Activated CD8-positive, alpha-beta T cell treated with anti-CD3 and anti-CD28 coated beads for 36 hours (primary cell): ENCODE measurements at regions of chr20 and their contacts with region 1.

Region 1: GRCh38 chr20:17682103-17682888 is at the start of gene RRBP1:
- DNase-seq: peak; percentile 97
- ATAC-seq: peak; percentile 96
- H3K4me3 Mint-ChIP-seq: peak within 1 kb of the TSS; percentile 78
- H3K27ac Mint-ChIP-seq: peak within 1 kb of the TSS; percentile 82
- H3K4me1 Mint-ChIP-seq: peaks cover 26% of the 10 kb centered on the region
- H3K27me3 Mint-ChIP-seq: peaks cover 27% of the 10 kb centered on the region
- CTCF ChIP-seq: peak; percentile 94
- total RNA-seq, gene RRBP1: 35.2 to 35.9 TPM

Region 2: GRCh38 chr20:17262786-17263185 is 419.5 kb before region 1 on chr20:
- CTCF ChIA-PET with region 1: no interaction called
- POLR2A ChIA-PET with region 1: no interaction called
- intact Hi-C with region 1: no loop called
- DNase-seq: no peak
- ATAC-seq: no peak
- H3K4me3 Mint-ChIP-seq: no peak overlapping the region
- H3K27ac Mint-ChIP-seq: no peak overlapping the region
- H3K4me1 Mint-ChIP-seq: no peaks in the 10 kb centered on the region
- H3K27me3 Mint-ChIP-seq: peaks cover 2% of the 10 kb centered on the region
- CTCF ChIP-seq: no peak

Region 3: GRCh38 chr20:17504898-17505635 is 177.2 kb before region 1 on chr20:
- CTCF ChIA-PET with region 1: interaction called, 22 read pairs
- POLR2A ChIA-PET with region 1: interaction called, 5 read pairs
- intact Hi-C with region 1: no loop called
- DNase-seq: no peak
- ATAC-seq: peak; percentile 63
- H3K4me3 Mint-ChIP-seq: peak overlapping the region; percentile 78
- H3K27ac Mint-ChIP-seq: peak overlapping the region; percentile 85
- H3K4me1 Mint-ChIP-seq: peaks cover 37% of the 10 kb centered on the region
- H3K27me3 Mint-ChIP-seq: peaks cover 3% of the 10 kb centered on the region
- CTCF ChIP-seq: peak; percentile 74

Region 4: GRCh38 chr20:17654649-17655285 is 27.5 kb before region 1 on chr20:
- CTCF ChIA-PET with region 1: interaction called, 11 read pairs
- POLR2A ChIA-PET with region 1: no interaction called
- intact Hi-C with region 1: no loop called
- DNase-seq: peak; percentile 23
- ATAC-seq: no peak
- H3K4me3 Mint-ChIP-seq: no peak overlapping the region
- H3K27ac Mint-ChIP-seq: no peak overlapping the region
- H3K4me1 Mint-ChIP-seq: peaks cover 18% of the 10 kb centered on the region
- H3K27me3 Mint-ChIP-seq: no peaks in the 10 kb centered on the region
- CTCF ChIP-seq: peak; percentile 56

Region 5: DNA sequence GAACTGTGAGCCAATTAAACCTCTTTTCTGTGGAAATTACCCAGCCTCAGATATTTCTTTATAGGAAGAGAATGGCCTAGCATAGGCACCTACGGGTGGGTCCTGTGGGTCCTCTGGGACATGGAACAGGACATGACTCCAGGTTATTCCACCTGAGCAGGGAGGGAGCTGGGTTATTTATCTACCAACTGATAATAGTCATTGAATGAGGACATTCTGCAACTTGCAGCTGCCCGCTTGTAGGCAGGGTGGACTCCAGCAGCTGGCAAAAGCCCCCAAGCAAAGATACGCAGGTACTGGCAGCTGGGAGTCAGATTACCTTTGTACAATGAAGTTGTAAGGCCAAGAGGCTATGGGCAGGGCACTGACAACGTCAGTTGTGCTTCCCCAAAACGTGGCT is 16.1 kb after region 1 on chr20:
- CTCF ChIA-PET with region 1: interaction called, 24 read pairs
- POLR2A ChIA-PET with region 1: no interaction called
- intact Hi-C with region 1: no loop called
- DNase-seq: no peak
- ATAC-seq: no peak
- H3K4me3 Mint-ChIP-seq: no peak overlapping the region
- H3K27ac Mint-ChIP-seq: no peak overlapping the region
- H3K4me1 Mint-ChIP-seq: no peaks in the 10 kb centered on the region
- H3K27me3 Mint-ChIP-seq: peaks cover 10% of the 10 kb centered on the region
- CTCF ChIP-seq: no peak

Region 6: DNA sequence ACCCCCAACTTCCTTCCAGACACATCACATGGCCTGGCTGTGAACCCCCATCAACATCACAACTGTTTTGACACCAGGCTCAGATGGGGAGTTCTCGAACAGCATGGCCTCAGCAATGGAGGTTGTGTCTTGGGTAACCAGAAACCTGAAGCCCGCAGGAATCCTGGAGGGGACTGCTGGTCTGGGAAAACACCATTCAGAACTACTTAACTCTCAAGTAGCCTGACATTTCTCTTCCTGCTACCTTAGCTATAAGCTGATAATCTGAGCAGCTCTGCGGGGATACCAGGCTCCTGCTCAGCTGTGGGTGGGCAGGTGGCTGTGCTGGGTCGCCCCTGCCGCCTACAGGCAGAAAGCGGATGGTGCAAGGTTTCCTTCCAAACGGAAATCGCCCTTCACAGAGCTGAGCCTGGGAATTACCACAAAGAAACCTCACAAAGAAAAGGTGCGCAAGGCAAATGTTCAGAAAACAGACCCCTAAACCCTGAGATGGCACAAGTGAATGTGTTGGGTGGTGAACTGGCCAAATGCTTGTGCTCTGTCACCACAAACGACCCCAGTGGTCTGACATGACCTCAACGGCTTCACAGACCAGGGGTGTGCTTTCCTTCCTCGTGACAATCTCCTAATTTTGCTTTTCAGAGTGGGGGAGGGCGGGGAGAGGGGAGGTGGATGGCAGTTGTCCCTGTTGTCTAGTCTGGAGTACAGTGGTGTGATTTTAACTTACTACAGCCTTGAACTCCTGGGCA is 256.7 kb after region 1 on chr20:
- CTCF ChIA-PET with region 1: interaction called, 19 read pairs
- POLR2A ChIA-PET with region 1: no interaction called
- intact Hi-C with region 1: no loop called
- DNase-seq: peak; percentile 80
- ATAC-seq: peak; percentile 95
- H3K4me3 Mint-ChIP-seq: no peak overlapping the region
- H3K27ac Mint-ChIP-seq: peak overlapping the region; percentile 44
- H3K4me1 Mint-ChIP-seq: peaks cover 30% of the 10 kb centered on the region
- H3K27me3 Mint-ChIP-seq: no peaks in the 10 kb centered on the region
- CTCF ChIP-seq: peak; percentile 85

Region 7: DNA sequence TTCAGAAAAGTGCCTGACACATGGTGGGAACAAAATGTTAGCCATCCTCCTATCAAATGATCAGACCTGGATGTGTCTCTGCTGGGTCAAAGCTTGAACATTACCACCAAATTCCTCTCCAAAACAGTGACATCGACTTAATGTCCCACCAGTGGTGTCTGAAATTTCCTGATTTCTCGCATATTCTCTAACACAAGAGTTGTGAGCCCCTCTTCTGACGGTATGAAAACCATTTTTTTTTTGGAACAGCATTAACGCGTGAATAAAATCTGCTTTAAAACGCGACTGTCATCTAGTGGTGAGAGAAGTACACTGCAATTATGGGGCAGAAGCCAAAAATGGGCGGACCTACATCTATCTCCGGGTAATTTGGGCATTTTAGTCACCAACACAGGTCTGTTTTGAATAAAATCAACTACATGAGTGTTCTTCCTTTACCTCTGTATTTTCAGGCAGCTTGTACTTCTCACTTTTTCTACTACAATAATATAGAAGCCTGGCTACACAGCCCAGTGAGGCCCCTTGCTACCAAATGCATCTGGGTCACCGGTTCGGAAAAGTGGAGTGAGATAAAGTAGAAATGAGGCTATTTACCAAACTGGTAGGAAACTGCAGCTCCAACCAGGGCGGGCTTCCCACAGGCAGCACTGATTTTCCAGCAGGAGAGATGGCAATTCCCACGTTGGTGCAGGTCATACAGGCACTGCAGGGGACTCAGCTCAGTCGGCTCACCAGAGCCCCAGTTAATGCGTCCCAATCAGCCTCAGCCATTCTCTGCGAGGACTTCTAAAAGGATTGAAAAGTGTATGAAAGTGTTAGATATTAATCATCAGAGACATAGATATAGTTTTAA is 313.9 kb after region 1 on chr20:
- CTCF ChIA-PET with region 1: interaction called, 11 read pairs
- POLR2A ChIA-PET with region 1: no interaction called
- intact Hi-C with region 1: loop called (anchors 10 kb)
- DNase-seq: peak; percentile 54
- ATAC-seq: peak; percentile 72
- H3K4me3 Mint-ChIP-seq: no peak overlapping the region
- H3K27ac Mint-ChIP-seq: no peak overlapping the region
- H3K4me1 Mint-ChIP-seq: peaks cover 27% of the 10 kb centered on the region
- H3K27me3 Mint-ChIP-seq: peaks cover 22% of the 10 kb centered on the region
- CTCF ChIP-seq: peak; percentile 94